ENCODE measurements at regions of chr9 and their contacts with region 1.

Region 1: GRCh38 chr9:72038890-72039410 is 21.5 kb downstream of the C9orf57 start:
- DNase-seq: peak; percentile 45
- ATAC-seq: peak; percentile 95
- H3K4me3 ChIP-seq: no peak overlapping the region
- H3K27ac ChIP-seq: no peak overlapping the region
- H3K4me1 ChIP-seq: no peaks in the 10 kb centered on the region; the same call in 1 of the 2 replicates
- H3K27me3 ChIP-seq: no peaks in the 10 kb centered on the region
- CTCF ChIP-seq: peak; percentile 93 to 96 (median 94)
- EP300 ChIP-seq: no peak
- POLR2A ChIP-seq: no peak
- RAD21 ChIP-seq: peak; percentile 95

Region 2: GRCh38 chr9:71955300-71955915 is 83.5 kb before region 1 on chr9:
- CTCF ChIA-PET with region 1: no interaction called
- POLR2A ChIA-PET with region 1: no interaction called
- RAD21 ChIA-PET with region 1: no interaction called
- SMC1A ChIA-PET with region 1: no interaction called
- in situ Hi-C with region 1: no loop called
- intact Hi-C with region 1: no loop called
- DNase-seq: no peak
- ATAC-seq: peak; percentile 93
- H3K4me3 ChIP-seq: no peak overlapping the region
- H3K27ac ChIP-seq: no peak overlapping the region
- H3K4me1 ChIP-seq: no peaks in the 10 kb centered on the region
- H3K27me3 ChIP-seq: no peaks in the 10 kb centered on the region
- CTCF ChIP-seq: no peak
- EP300 ChIP-seq: no peak
- POLR2A ChIP-seq: no peak
- RAD21 ChIP-seq: no peak

Region 3: DNA sequence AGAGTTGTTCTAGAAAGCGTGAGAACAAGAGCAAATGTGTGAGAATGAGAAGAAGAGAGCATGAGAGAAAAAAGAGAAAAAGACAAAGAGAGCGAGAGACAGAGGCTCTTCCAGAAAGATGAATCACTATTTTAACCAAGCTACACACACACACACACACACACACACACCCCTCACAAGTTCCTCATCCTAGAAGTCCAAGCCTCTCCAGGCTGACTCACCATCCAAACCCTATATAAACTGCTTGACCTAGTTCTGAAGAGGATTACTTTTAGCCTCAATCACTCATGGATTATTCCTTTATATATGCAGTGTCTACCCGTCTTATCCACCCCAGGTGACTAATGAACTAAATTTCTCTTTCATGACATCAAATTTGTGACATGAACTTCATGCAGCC is 16.1 kb before region 1 on chr9:
- CTCF ChIA-PET with region 1: interaction called, 39 read pairs
- POLR2A ChIA-PET with region 1: no interaction called
- RAD21 ChIA-PET with region 1: interaction called, 5 read pairs
- SMC1A ChIA-PET with region 1: interaction called, 12 read pairs
- in situ Hi-C with region 1: no loop called
- intact Hi-C with region 1: no loop called
- DNase-seq: no peak
- ATAC-seq: no peak
- H3K4me3 ChIP-seq: no peak overlapping the region
- H3K27ac ChIP-seq: no peak overlapping the region
- H3K4me1 ChIP-seq: no peaks in the 10 kb centered on the region
- H3K27me3 ChIP-seq: no peaks in the 10 kb centered on the region
- CTCF ChIP-seq: no peak
- EP300 ChIP-seq: no peak
- POLR2A ChIP-seq: no peak
- RAD21 ChIP-seq: no peak

Region 4: GRCh38 chr9:72154468-72155281 is 115.7 kb after region 1 on chr9:
- CTCF ChIA-PET with region 1: interaction called, 6 read pairs
- POLR2A ChIA-PET with region 1: no interaction called
- RAD21 ChIA-PET with region 1: interaction called, 15 read pairs
- SMC1A ChIA-PET with region 1: interaction called, 10 read pairs
- in situ Hi-C with region 1: no loop called
- intact Hi-C with region 1: loop called (anchors 2 kb)
- DNase-seq: peak; percentile 60
- ATAC-seq: peak; percentile 94
- H3K4me3 ChIP-seq: no peak overlapping the region
- H3K27ac ChIP-seq: no peak overlapping the region
- H3K4me1 ChIP-seq: no peaks in the 10 kb centered on the region; the same call in 1 of the 2 replicates
- H3K27me3 ChIP-seq: peaks cover 0 to under 1% of the 10 kb centered on the region in 2 experiments; a peak in 2 of 4 replicates
- CTCF ChIP-seq: no peak
- EP300 ChIP-seq: peak in 1 of 2 experiments; percentile 55; a peak in 3 of 4 replicates
- POLR2A ChIP-seq: no peak
- RAD21 ChIP-seq: no peak

Region 5: GRCh38 chr9:72210522-72210921 is 171.6 kb after region 1 on chr9:
- CTCF ChIA-PET with region 1: interaction called, 82 read pairs
- POLR2A ChIA-PET with region 1: no interaction called
- RAD21 ChIA-PET with region 1: interaction called, 13 read pairs
- SMC1A ChIA-PET with region 1: interaction called, 80 read pairs
- in situ Hi-C with region 1: no loop called
- intact Hi-C with region 1: no loop called
- DNase-seq: no peak
- ATAC-seq: peak; percentile 80
- H3K4me3 ChIP-seq: no peak overlapping the region
- H3K27ac ChIP-seq: no peak overlapping the region
- H3K4me1 ChIP-seq: peaks cover 2% of the 10 kb centered on the region
- H3K27me3 ChIP-seq: no peaks in the 10 kb centered on the region
- CTCF ChIP-seq: no peak
- EP300 ChIP-seq: peak; percentile 60 to 64; a peak in 3 of 4 replicates
- POLR2A ChIP-seq: no peak
- RAD21 ChIP-seq: no peak

Region 6: GRCh38 chr9:72280913-72281500 is 242.1 kb after region 1 on chr9:
- CTCF ChIA-PET with region 1: interaction called, 470 read pairs
- POLR2A ChIA-PET with region 1: interaction called, 9 read pairs
- RAD21 ChIA-PET with region 1: interaction called, 365 read pairs
- SMC1A ChIA-PET with region 1: interaction called, 367 read pairs
- in situ Hi-C with region 1: no loop called
- intact Hi-C with region 1: loop called (anchors 2 kb)
- DNase-seq: no peak
- ATAC-seq: peak; percentile 92
- H3K4me3 ChIP-seq: no peak overlapping the region
- H3K27ac ChIP-seq: no peak overlapping the region
- H3K4me1 ChIP-seq: no peaks in the 10 kb centered on the region
- H3K27me3 ChIP-seq: no peaks in the 10 kb centered on the region
- CTCF ChIP-seq: peak; percentile 91 to 99 (median 95); a peak in 5 of 6 replicates
- EP300 ChIP-seq: no peak
- POLR2A ChIP-seq: no peak
- RAD21 ChIP-seq: peak; percentile 99

Region 7: GRCh38 chr9:72753266-72753893 is 714.4 kb after region 1 on chr9:
- CTCF ChIA-PET with region 1: interaction called, 4 read pairs
- POLR2A ChIA-PET with region 1: no interaction called
- RAD21 ChIA-PET with region 1: no interaction called
- SMC1A ChIA-PET with region 1: no interaction called
- in situ Hi-C with region 1: no loop called
- intact Hi-C with region 1: loop called (anchors 2 kb)
- DNase-seq: no peak
- ATAC-seq: no peak
- H3K4me3 ChIP-seq: no peak overlapping the region
- H3K27ac ChIP-seq: no peak overlapping the region
- H3K4me1 ChIP-seq: no peaks in the 10 kb centered on the region
- H3K27me3 ChIP-seq: no peaks in the 10 kb centered on the region; a peak in 1 of 4 replicates
- CTCF ChIP-seq: peak in 1 of 3 experiments; percentile 37; a peak in 1 of 6 replicates
- EP300 ChIP-seq: no peak
- POLR2A ChIP-seq: no peak
- RAD21 ChIP-seq: peak; percentile 61

Region 8: GRCh38 chr9:73081979-73082657 is 1043.2 kb after region 1 on chr9:
- CTCF ChIA-PET with region 1: no interaction called
- POLR2A ChIA-PET with region 1: no interaction called
- RAD21 ChIA-PET with region 1: no interaction called
- SMC1A ChIA-PET with region 1: interaction called, 3 read pairs
- in situ Hi-C with region 1: no loop called
- intact Hi-C with region 1: loop called (anchors 10 kb)
- DNase-seq: no peak
- ATAC-seq: peak; percentile 69
- H3K4me3 ChIP-seq: no peak overlapping the region
- H3K27ac ChIP-seq: no peak overlapping the region
- H3K4me1 ChIP-seq: no peaks in the 10 kb centered on the region
- H3K27me3 ChIP-seq: no peaks in the 10 kb centered on the region
- CTCF ChIP-seq: peak; percentile 64 to 76 (median 67)
- EP300 ChIP-seq: no peak
- POLR2A ChIP-seq: no peak
- RAD21 ChIP-seq: peak; percentile 75